Breast epithelium (tissue), 4 donors: ENCODE measurements at regions of chr22 and their contacts with region 1.

Region 1: DNA sequence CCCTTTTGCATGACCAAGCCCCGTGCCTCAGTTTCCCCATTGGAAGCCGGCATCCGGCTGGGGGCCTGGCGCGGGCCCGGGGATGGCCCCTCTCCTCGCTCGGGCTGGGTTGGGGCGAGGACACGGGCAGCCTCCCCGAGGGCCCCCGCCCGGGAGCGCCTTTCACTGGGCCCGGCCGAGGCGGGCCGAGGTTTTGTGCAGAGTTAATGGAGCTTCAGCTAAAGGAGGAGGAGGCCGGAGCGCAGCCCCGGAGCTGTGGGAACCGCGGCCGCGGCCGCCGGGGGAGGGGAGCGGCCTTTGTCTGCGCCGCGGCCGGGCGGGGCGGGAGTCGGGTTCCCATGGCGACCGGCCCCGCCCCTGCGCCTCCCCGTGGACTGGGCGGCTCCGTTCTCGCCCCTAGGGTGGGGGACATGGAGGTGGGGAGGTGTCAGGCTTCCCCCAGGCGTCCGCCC is 1.4 kb upstream of the MAPK11 start:
- DNase-seq: no peak
- H3K4me3 ChIP-seq: peak overlapping the region; percentile 52 to 76 (median 60)
- H3K27ac ChIP-seq: no peak overlapping the region
- H3K4me1 ChIP-seq: peaks cover 12 to 34% of the 10 kb centered on the region in 2 donors
- H3K27me3 ChIP-seq: no peaks in the 10 kb centered on the region
- CTCF ChIP-seq: no peak
- POLR2A ChIP-seq: no peak

Region 2: DNA sequence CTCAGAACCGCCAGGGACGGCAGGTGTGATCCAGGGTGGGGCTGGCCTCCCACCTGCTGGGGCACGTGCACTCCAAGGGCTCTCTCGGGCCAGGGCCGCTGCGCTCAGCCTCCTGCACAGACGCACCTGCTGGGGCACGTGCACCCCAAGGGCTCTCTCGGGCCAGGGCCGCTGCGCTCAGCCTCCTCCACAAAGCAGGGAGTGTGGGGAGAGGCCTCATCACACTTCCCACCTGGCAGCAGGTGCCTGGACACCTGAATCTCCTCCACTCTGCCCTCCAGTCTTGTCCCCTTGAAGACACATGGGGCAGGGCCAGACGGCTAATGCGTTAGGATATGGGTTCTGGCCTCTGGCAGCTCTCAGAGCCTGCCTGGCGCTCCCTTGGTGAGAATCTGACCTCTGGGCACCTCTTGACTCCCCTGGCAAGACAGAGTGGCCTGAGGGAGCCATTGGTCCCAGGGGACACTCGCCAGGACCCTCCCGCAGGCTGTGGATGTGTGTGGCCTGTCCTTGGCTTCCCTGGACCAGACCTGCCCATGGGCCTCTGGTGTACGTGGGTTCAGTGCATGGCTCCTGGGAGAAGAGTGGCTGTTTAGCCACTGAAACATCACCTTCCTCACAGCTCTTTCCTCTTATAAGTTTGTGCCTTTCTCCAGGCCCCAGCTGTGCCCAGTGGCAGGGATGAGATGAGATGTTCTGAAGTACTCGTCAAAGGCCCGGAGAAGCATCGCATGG is 517.4 kb before region 1 on chr22:
- intact Hi-C with region 1: no loop called
- DNase-seq: no peak
- H3K4me3 ChIP-seq: no peak overlapping the region
- H3K27ac ChIP-seq: no peak overlapping the region
- H3K4me1 ChIP-seq: no peaks in the 10 kb centered on the region
- H3K27me3 ChIP-seq: peaks cover 3 to 24% of the 10 kb centered on the region in 2 donors
- CTCF ChIP-seq: no peak
- POLR2A ChIP-seq: no peak

Region 3: DNA sequence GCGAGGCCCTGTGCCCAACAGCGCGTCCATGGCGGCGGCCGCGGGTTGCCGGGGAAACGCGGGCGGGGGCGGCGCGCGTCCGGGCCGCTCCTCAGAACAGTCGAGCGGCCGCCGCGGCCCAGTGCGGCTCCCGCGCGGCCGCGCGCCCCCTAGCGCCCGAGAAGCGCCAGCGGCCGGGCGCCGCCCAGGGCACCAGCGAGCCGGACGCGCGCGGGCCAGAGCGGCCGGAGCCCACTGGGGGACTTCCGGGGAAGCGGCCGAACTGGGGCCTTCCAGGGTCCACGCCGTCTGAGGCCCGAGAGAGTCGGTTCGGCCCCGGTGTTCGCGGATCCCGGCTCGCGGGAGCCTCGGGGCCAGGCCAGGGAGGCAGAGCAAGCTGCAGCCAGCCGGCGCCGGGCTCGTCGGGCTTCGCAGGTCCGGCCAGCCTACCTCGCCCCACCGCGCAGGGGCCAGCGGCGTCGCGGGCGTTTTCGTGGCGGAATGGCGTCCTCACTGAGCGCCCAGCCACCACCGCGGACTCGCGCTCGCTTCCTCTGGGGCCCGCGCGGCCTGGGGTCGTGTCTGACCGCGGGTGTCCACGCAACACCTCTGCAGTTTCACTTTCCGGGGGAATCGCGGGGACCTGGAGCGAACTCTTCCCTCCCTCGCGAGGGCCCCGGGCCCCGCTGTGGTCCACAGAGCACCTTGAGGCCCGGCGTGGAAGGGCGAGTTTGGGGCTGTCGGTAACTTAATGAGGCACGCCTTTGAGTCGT is 55.6 kb after region 1 on chr22 and contains the start of gene DENND6B:
- intact Hi-C with region 1: loop called (anchors 5 kb)
- DNase-seq: peak in 1 of 2 donors; percentile 69
- H3K4me3 ChIP-seq: peak within 1 kb of the TSS; percentile 77 to 92 (median 81)
- H3K27ac ChIP-seq: peak within 1 kb of the TSS; percentile 94 to 97
- H3K4me1 ChIP-seq: peaks cover 0 to 8% of the 10 kb centered on the region in 2 donors
- H3K27me3 ChIP-seq: no peaks in the 10 kb centered on the region
- CTCF ChIP-seq: peak; percentile 22 to 98 (median 34)
- POLR2A ChIP-seq: no peak
- total RNA-seq, gene DENND6B: 1.8 to 6.9 (median 5.4) TPM